ENCODE measurements at regions of chr16 and their contacts with region 1.

Region 1: DNA sequence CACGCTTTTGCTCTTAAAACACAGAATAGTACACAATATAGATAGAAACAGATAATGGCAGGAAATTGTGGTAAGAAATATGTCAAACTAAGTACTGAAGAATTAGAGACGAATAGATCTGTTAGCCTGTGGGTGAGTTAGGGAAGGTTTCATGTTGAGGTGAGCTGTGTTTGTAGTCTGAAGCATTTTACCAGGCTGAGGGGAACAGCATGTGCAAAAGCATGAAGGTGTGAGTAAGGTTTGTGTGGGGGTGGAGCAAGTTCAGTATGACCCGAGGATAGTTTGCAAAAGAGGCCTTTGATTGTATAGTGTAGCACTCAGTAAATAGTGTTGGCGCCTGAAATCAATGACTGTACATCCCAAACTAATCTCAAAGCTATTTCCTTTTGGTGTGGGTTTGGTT is 13.8 kb downstream of the IGSF6 start:
- DNase-seq: no peak
- H3K4me3 ChIP-seq: peak overlapping the region in 1 of 2 experiments; percentile 4; a peak in 1 of 4 replicates
- H3K27ac ChIP-seq: peak overlapping the region; percentile 4 to 57; a peak in 3 of 4 replicates
- H3K4me1 ChIP-seq: peaks cover 0 to 17% of the 10 kb centered on the region in 2 experiments; a peak in 2 of 4 replicates
- H3K27me3 ChIP-seq: no peaks in the 10 kb centered on the region
- CTCF ChIP-seq: no peak
- EP300 ChIP-seq: no peak
- RAD21 ChIP-seq: no peak

Region 2: DNA sequence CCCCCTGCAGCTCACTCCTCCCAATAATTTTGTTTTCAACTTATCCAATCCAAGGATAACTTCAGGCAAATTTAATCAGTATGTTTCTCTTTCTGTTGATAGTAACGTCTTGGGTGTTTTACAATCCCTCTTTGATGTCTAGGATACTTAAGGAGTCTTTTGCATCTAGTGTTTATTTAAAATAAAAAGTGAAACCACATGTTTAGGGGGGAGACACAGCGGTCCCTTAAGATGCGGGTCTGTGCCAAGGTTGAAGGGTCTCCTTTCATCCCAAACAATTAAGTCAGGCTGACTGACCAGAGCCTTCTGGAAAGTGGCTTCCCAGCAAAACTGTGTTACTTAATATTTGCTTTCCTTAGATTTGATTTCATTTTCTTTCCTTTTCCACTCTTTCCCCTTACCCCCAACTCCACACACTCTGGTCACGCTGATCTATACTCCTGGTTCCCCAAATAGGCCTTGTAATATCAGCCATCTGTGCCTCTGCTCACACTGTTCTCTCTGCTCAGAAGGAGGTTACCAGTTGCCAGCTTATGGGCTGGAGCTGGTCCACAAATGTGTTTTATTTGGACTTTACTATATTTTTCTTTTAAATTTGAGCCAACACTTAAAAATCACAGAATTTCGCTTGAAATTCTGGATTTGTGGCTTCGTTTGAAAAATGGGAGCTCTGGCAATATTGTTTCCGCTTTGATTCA is 393.9 kb before region 1 on chr16:
- CTCF ChIA-PET with region 1: no interaction called
- POLR2A ChIA-PET with region 1: no interaction called
- DNase-seq: no peak
- H3K4me3 ChIP-seq: no peak overlapping the region
- H3K27ac ChIP-seq: no peak overlapping the region
- H3K4me1 ChIP-seq: no peaks in the 10 kb centered on the region
- H3K27me3 ChIP-seq: no peaks in the 10 kb centered on the region; the same call in 1 of the 2 replicates
- CTCF ChIP-seq: no peak
- EP300 ChIP-seq: no peak
- RAD21 ChIP-seq: no peak

Region 3: DNA sequence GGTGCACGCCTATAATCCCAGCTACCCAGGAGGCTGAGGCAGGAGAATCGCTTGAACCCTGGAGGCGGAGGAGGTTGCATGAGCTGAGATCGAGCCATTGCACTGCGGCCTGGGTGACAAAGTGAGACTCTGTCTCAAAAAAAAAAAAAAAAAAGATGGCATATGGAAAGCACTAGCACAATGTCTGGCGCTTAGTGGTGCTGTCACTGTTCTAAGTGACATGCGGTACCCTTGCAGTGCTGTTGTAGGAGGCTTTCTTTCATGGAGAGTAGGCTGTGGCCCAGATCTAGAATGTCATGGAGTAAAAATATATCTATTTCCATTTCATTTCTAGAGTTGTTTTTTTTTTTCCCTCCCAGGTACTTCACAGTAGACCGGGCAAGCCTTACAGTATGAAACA is 53.8 kb before region 1 on chr16:
- CTCF ChIA-PET with region 1: interaction called, 90 read pairs
- POLR2A ChIA-PET with region 1: interaction called, 4 read pairs
- DNase-seq: no peak
- H3K4me3 ChIP-seq: no peak overlapping the region
- H3K27ac ChIP-seq: no peak overlapping the region
- H3K4me1 ChIP-seq: no peaks in the 10 kb centered on the region
- H3K27me3 ChIP-seq: no peaks in the 10 kb centered on the region
- CTCF ChIP-seq: no peak
- EP300 ChIP-seq: no peak
- RAD21 ChIP-seq: no peak

Region 4: DNA sequence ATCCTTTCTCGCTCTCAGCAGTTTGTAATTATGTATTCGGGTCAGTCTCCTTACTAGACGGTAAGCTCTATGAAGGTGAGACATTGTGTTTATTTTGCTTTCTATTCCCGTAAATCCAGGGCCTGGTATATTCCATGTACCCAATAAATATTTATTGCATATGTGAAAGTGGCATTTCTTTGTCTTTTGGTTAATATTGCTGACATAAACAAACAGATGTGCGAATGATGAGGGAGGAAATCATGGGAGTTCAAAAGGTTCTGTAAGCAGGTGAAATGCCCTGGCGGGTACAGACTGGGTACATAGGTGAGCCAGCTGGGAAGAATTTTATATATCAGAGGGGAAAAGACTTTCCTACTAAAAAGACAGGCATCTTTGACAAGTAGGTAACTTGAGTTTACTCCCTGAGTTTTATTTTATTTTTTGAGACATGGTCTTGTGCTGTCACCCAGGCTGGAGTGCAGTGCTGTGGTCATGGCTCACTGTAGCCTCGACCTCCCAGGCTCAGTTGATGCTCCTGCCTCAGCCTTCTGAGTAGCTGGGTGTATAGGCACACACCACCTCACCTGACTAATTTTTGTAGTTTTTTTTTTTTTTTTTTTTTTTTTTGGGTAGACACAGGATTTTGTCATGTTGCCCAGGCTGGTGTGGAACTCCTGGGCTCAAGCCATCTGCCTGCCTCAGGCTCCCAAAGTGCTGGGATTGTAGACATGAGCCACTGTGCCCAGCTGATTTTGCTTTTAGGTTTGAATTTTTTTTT is 44.9 kb before region 1 on chr16:
- CTCF ChIA-PET with region 1: interaction called, 19 read pairs
- POLR2A ChIA-PET with region 1: no interaction called
- DNase-seq: no peak
- H3K4me3 ChIP-seq: no peak overlapping the region
- H3K27ac ChIP-seq: no peak overlapping the region
- H3K4me1 ChIP-seq: peaks cover 0 to 4% of the 10 kb centered on the region in 2 experiments; a peak in 1 of 4 replicates
- H3K27me3 ChIP-seq: no peaks in the 10 kb centered on the region
- CTCF ChIP-seq: no peak
- EP300 ChIP-seq: no peak
- RAD21 ChIP-seq: no peak

Region 5: GRCh38 chr16:21599233-21600030 is 39.1 kb before region 1 on chr16 and contains the start of gene METTL9:
- CTCF ChIA-PET with region 1: interaction called, 19 read pairs
- POLR2A ChIA-PET with region 1: no interaction called
- DNase-seq: peak; percentile 96
- H3K4me3 ChIP-seq: peak within 1 kb of the TSS; percentile 78 to 83
- H3K27ac ChIP-seq: peak within 1 kb of the TSS; percentile 86 to 93
- H3K4me1 ChIP-seq: peaks cover 4 to 12% of the 10 kb centered on the region in 2 experiments; a peak in 3 of 4 replicates
- H3K27me3 ChIP-seq: no peaks in the 10 kb centered on the region
- CTCF ChIP-seq: no peak
- EP300 ChIP-seq: peak; percentile 43 to 46; a peak in 2 of 4 replicates
- RAD21 ChIP-seq: peak; percentile 31; the same call in 1 of the 2 replicates
- polyA plus RNA-seq, gene METTL9: 70.7 and 82.9 TPM in 2 replicates